Body of pancreas (tissue), 4 donors: ENCODE measurements at regions of chr5 and their contacts with region 1.

Region 1: GRCh38 chr5:58460732-58461286 is 923 bp upstream of the PLK2 start:
- DNase-seq: peak; percentile 94 to 95 (median 94)
- ATAC-seq: peak; percentile 79
- H3K4me3 ChIP-seq: peak overlapping the region; percentile 72 to 86
- H3K27ac ChIP-seq: peak overlapping the region; percentile 96 to 99 (median 98)
- H3K4me1 ChIP-seq: peaks cover 45% of the 10 kb centered on the region
- H3K27me3 ChIP-seq: no peaks in the 10 kb centered on the region
- CTCF ChIP-seq: peak; percentile 50 to 91 (median 85)
- POLR2A ChIP-seq: no peak

Region 2: DNA sequence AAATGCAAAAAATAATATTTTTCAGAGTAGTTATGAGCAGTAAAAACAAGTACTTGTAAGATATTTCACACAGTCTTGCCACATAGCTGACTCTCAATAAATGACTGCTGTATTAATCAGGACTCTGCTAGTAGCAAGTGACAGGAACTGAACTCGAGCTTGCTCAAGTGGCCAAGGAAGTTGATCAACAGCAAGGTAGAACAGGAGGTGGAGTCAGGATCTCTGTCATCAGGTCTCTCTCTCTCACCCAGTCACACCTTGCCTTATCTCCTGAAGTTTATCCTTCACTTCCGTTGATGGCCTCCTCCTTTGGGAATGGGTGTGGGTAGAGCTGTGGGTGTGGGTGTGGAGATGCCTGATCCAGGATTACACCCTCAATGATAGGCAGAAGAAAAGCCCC is 1180.0 kb before region 1 on chr5:
- intact Hi-C with region 1: loop called (anchors 10 kb)
- DNase-seq: no peak
- ATAC-seq: no peak
- H3K4me3 ChIP-seq: no peak overlapping the region
- H3K27ac ChIP-seq: no peak overlapping the region
- H3K4me1 ChIP-seq: no peaks in the 10 kb centered on the region
- H3K27me3 ChIP-seq: no peaks in the 10 kb centered on the region
- CTCF ChIP-seq: no peak
- POLR2A ChIP-seq: no peak

Region 3: GRCh38 chr5:57499262-57500050 is 961.4 kb before region 1 on chr5:
- intact Hi-C with region 1: loop called (anchors 10 kb)
- DNase-seq: peak in 2 of 4 donors; percentile 17 to 33
- ATAC-seq: peak; percentile 52
- H3K4me3 ChIP-seq: no peak overlapping the region
- H3K27ac ChIP-seq: no peak overlapping the region
- H3K4me1 ChIP-seq: peaks cover 32% of the 10 kb centered on the region
- H3K27me3 ChIP-seq: no peaks in the 10 kb centered on the region
- CTCF ChIP-seq: peak; percentile 17 to 70 (median 58)
- POLR2A ChIP-seq: no peak

Region 4: GRCh38 chr5:57779383-57780223 is 681.2 kb before region 1 on chr5:
- intact Hi-C with region 1: loop called (anchors 10 kb)
- DNase-seq: peak; percentile 40 to 51 (median 46)
- ATAC-seq: peak; percentile 74
- H3K4me3 ChIP-seq: no peak overlapping the region
- H3K27ac ChIP-seq: no peak overlapping the region
- H3K4me1 ChIP-seq: peaks cover 36% of the 10 kb centered on the region
- H3K27me3 ChIP-seq: no peaks in the 10 kb centered on the region
- CTCF ChIP-seq: peak; percentile 44 to 77 (median 60)
- POLR2A ChIP-seq: no peak

Region 5: DNA sequence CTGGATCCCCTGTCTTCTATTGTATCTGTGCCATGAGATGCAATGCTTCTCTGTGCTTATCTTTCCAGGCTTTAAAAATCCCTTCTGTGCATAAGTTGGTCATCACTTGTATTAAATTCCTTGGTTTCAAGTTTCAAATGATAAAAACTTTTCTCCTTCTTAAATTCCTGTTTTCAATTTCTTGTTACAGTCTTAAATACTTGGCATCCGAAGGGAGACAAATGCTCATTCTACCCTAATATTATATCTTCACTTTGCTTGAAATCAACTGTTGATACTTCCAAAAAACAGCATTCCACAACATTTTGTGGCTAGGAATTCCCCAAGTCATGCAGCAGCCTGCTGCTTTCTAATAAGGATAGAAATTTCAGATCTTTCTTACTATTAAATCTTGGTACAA is 565.0 kb before region 1 on chr5:
- intact Hi-C with region 1: loop called (anchors 5 kb)
- DNase-seq: no peak
- ATAC-seq: no peak
- H3K4me3 ChIP-seq: no peak overlapping the region
- H3K27ac ChIP-seq: no peak overlapping the region
- H3K4me1 ChIP-seq: peaks cover 11% of the 10 kb centered on the region
- H3K27me3 ChIP-seq: no peaks in the 10 kb centered on the region
- CTCF ChIP-seq: no peak
- POLR2A ChIP-seq: no peak

Region 6: DNA sequence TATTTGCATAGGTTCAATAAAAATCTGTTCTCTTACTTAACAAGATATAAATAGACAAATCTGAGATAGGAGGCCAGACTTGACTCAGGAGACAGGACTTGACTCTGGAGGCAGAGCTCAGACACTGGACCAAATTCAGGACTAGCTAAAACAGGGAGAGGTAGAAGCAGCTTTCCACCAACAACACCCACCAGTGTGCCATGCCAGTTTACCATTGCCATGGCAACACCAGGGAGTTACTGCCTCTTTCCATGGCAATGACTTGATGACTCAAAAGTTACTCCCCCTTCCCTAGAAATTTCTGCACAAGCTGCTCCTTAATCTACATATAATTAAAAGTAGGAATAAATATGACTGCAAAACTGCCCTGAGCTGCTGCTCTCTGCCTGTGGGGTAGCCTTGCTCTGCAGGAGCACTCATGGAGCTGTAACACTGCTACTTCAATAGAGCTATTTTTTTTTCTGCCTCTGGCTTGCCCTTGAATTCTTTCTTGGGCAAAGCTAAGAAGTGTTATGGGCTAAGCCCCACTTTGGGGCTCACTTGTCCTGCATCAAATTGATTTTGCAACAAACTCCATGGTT is 474.0 kb before region 1 on chr5:
- intact Hi-C with region 1: no loop called
- DNase-seq: peak in 2 of 4 donors; percentile 3 to 12
- ATAC-seq: no peak
- H3K4me3 ChIP-seq: no peak overlapping the region
- H3K27ac ChIP-seq: no peak overlapping the region
- H3K4me1 ChIP-seq: no peaks in the 10 kb centered on the region
- H3K27me3 ChIP-seq: no peaks in the 10 kb centered on the region
- CTCF ChIP-seq: no peak
- POLR2A ChIP-seq: no peak

Region 7: GRCh38 chr5:58348996-58349961 is 111.5 kb before region 1 on chr5:
- intact Hi-C with region 1: no loop called
- DNase-seq: no peak
- ATAC-seq: no peak
- H3K4me3 ChIP-seq: no peak overlapping the region
- H3K27ac ChIP-seq: no peak overlapping the region
- H3K4me1 ChIP-seq: no peaks in the 10 kb centered on the region
- H3K27me3 ChIP-seq: no peaks in the 10 kb centered on the region
- CTCF ChIP-seq: no peak
- POLR2A ChIP-seq: no peak